ENCODE measurements at regions of chr12 and their contacts with region 1.

Region 1: GRCh38 chr12:13255792-13256691 is 59.5 kb downstream of the EMP1 start:
- DNase-seq: peak; percentile 92
- ATAC-seq: peak; percentile 100
- H3K4me3 ChIP-seq: peak overlapping the region; percentile 33
- H3K27ac ChIP-seq: no peak overlapping the region
- H3K4me1 ChIP-seq: peaks cover 5% of the 10 kb centered on the region
- H3K27me3 ChIP-seq: 0 out of 2 replicates have a peak, but pooled peaks cover 2% of the 10 kb centered on the region
- CTCF ChIP-seq: peak; percentile 98
- POLR2A ChIP-seq: no peak
- RAD21 ChIP-seq: peak; percentile 85

Region 2: DNA sequence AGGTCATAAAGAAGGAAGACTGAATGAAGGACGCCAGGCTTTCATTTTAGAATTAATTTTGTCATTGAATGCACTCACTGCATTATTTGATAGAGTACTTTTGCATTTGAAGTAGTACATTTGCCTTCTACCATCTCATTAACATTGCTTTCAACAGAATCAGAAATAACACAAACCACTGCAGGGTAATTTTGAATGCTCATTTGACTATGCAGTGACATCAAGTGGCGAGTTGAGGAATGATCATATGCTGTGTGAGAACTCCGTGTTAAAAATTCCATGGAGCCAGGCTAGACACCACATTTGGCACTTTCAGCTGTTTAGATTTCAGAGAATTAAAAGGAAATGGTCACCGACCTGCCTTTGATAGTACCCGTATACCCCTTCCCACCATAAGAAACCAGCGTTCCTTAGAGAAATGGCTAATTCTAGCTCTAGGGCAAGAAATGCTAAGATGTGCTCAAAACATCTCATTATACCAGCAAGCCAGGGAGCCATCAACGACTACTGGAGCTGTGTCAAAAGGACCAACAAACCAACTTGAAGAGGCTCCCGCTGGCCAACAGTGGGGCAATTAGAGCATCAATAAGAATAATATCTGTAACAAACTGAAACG is 272.5 kb before region 1 on chr12:
- CTCF ChIA-PET with region 1: no interaction called
- POLR2A ChIA-PET with region 1: no interaction called
- dilution Hi-C with region 1: no loop called
- in situ Hi-C with region 1: no loop called
- intact Hi-C with region 1: no loop called
- DNase-seq: peak; percentile 69
- ATAC-seq: peak; percentile 46
- H3K4me3 ChIP-seq: no peak overlapping the region
- H3K27ac ChIP-seq: no peak overlapping the region
- H3K4me1 ChIP-seq: peaks cover 20% of the 10 kb centered on the region
- H3K27me3 ChIP-seq: no peaks in the 10 kb centered on the region
- CTCF ChIP-seq: peak; percentile 79
- POLR2A ChIP-seq: no peak
- RAD21 ChIP-seq: peak; percentile 88

Region 3: GRCh38 chr12:13270817-13271216 is 14.8 kb after region 1 on chr12:
- CTCF ChIA-PET with region 1: interaction called, 16 read pairs
- POLR2A ChIA-PET with region 1: no interaction called
- dilution Hi-C with region 1: no loop called
- in situ Hi-C with region 1: no loop called
- intact Hi-C with region 1: no loop called
- DNase-seq: no peak
- ATAC-seq: no peak
- H3K4me3 ChIP-seq: no peak overlapping the region
- H3K27ac ChIP-seq: no peak overlapping the region
- H3K4me1 ChIP-seq: no peaks in the 10 kb centered on the region
- H3K27me3 ChIP-seq: peaks cover 70% of the 10 kb centered on the region
- CTCF ChIP-seq: no peak
- POLR2A ChIP-seq: no peak
- RAD21 ChIP-seq: no peak

Region 4: GRCh38 chr12:13278249-13278787 is 22.3 kb after region 1 on chr12:
- CTCF ChIA-PET with region 1: interaction called, 12 read pairs
- POLR2A ChIA-PET with region 1: no interaction called
- dilution Hi-C with region 1: no loop called
- in situ Hi-C with region 1: no loop called
- intact Hi-C with region 1: no loop called
- DNase-seq: peak; percentile 58
- ATAC-seq: peak; percentile 99
- H3K4me3 ChIP-seq: no peak overlapping the region
- H3K27ac ChIP-seq: no peak overlapping the region
- H3K4me1 ChIP-seq: no peaks in the 10 kb centered on the region
- H3K27me3 ChIP-seq: peaks cover 58% of the 10 kb centered on the region
- CTCF ChIP-seq: peak; percentile 92
- POLR2A ChIP-seq: no peak
- RAD21 ChIP-seq: peak; percentile 74

Region 5: DNA sequence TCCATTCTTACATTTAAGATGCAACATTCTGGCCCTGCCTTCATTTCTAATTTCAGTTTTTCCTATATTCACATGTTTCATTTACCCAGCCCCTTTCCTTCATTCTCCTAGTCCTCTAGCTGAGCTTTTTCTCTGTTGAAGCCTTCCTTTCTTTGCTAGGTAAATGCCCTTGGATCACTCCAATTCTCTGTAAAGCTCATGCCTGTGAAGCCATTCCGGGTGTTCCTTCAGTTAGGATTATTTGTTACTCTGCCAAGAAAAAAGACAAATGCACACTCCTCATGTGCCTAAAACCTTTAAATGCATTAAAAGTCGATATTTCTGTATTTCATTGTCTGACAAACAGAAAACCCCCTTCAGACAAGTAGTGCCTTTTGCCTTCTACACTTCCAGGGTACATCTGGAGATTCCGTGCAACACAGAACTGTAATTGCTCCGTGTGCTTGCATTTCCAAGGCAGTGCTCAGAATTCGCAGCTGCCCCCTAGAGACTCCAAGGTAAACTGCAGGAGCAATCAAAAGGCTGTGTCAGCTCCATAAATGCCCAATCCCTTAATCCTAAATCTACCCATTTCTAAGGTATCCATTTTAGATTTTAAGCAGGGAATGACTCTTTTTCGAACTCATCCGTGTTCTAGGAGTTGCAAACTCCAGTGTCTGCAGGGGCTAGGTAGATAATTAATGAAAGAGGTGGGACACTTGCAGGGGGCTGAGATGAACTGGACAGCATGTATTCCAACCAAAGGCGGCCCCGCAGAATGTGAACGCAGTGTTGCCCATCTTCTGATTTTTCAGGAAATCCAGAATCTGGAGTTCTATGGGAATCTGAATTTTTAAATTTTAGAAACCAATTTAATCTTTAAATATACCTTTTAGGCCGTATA is 405.2 kb after region 1 on chr12:
- CTCF ChIA-PET with region 1: interaction called, 3 read pairs
- POLR2A ChIA-PET with region 1: no interaction called
- dilution Hi-C with region 1: no loop called
- in situ Hi-C with region 1: no loop called
- intact Hi-C with region 1: loop called (anchors 1 kb)
- DNase-seq: peak; percentile 47
- ATAC-seq: peak; percentile 93
- H3K4me3 ChIP-seq: no peak overlapping the region
- H3K27ac ChIP-seq: no peak overlapping the region
- H3K4me1 ChIP-seq: no peaks in the 10 kb centered on the region
- H3K27me3 ChIP-seq: no peaks in the 10 kb centered on the region
- CTCF ChIP-seq: peak; percentile 65
- POLR2A ChIP-seq: no peak
- RAD21 ChIP-seq: peak; percentile 59

Measured in IMR-90 (cell line).